ENCODE measurements at regions of chr5 and their contacts with region 1.

Region 1: GRCh38 chr5:143319437-143320227 is 83.9 kb downstream of the NR3C1 start:
- DNase-seq: no peak
- ATAC-seq: no peak
- H3K4me3 ChIP-seq: no peak overlapping the region
- H3K27ac ChIP-seq: no peak overlapping the region
- H3K4me1 ChIP-seq: peaks cover 36% of the 10 kb centered on the region
- H3K27me3 ChIP-seq: no peaks in the 10 kb centered on the region
- CTCF ChIP-seq: no peak
- POLR2A ChIP-seq: no peak

Region 2: GRCh38 chr5:143359869-143360268 is 40.2 kb after region 1 on chr5:
- intact Hi-C with region 1: no loop called
- DNase-seq: no peak
- ATAC-seq: no peak
- H3K4me3 ChIP-seq: no peak overlapping the region
- H3K27ac ChIP-seq: no peak overlapping the region
- H3K4me1 ChIP-seq: peaks cover 30% of the 10 kb centered on the region
- H3K27me3 ChIP-seq: no peaks in the 10 kb centered on the region
- CTCF ChIP-seq: no peak
- POLR2A ChIP-seq: no peak

Region 3: DNA sequence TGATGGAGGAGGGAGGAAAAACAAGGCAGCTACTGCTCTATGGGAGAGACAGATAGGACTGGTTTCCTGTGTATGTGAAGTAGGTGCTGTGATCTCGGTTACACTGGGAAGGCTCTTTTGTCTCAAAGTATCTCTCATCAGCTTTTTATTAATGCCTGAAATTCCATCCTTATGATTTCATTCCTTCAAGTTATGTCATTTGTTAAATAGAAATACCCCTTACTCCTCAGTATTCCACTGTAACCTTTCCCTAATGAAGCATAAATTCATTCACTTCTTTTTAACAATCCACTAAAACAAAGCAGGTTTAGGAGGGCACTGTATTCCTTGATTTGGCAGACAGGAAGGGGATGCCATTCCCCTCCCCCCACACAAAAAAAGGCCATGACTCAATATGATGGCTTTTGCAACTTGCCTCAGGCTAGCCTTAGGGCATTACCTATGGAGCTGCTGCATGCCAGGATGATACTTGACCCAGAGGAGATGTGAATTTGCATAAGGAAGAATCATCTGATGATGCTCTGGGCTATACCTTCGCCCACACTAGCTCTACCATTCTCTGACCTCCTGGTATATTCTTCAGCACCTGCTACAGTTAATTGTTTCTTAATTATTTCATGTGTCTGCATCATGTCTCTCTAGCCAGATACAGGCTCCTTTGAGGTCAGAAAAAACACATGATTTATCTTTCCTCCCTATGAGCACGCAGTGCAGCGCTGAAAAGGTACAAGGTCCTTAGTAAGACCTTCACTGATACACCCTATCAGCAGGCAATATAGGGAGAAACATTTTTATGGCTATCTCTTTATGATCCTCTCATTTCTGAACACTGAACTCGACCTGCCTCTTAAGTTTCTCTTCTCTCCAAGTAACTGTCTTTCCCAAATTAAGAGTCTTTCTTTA is 57.5 kb after region 1 on chr5:
- intact Hi-C with region 1: loop called (anchors 10 kb)
- DNase-seq: no peak
- ATAC-seq: no peak
- H3K4me3 ChIP-seq: no peak overlapping the region
- H3K27ac ChIP-seq: no peak overlapping the region
- H3K4me1 ChIP-seq: peaks cover 5% of the 10 kb centered on the region
- H3K27me3 ChIP-seq: no peaks in the 10 kb centered on the region
- CTCF ChIP-seq: no peak
- POLR2A ChIP-seq: no peak

Measured in body of pancreas (tissue), 4 donors.